ENCODE measurements at regions of chr9 and their contacts with region 1.

Region 1: DNA sequence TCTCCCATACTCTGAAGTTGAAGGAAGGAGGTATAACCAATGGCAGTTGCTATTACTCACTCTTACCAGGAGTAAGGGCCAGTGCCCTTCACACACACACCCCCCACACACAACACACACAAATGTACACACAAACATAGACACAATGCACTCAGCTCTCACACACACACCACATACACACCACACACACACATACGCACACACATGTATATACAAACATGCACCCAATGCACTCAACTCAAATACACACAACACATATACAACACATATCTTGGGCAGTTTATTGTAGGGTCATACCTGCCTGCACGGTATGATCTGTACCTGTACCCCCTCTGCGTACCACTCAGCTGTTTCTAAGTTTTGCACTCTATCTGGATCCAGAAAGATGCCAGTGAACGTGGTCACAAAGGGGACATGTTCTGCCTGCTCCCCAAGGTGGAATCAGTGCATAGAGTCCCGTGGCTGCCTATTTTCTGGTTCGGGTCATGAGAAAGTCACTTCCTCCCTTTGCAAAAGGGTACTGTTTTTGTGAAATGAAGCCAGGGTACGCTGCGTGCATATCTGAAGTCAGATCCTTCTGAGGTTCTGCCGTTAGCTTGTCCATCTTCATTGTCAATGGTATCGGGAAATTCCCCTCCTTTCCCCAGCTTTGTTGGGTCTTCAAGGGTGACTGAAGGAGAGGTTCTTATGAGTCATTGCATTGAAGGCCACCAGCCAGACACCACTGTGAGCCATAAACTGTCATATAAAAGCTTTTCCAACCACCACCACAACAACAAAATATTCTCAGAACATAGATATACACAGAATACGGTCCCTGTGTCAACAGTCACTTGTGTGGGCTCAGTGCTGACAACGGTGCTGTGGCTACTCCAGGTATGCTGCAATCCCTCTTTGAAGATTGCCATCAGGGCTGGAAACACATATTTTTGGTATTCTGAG is 131.9 kb downstream of the UGCG start:
- DNase-seq: peak; percentile 53
- ATAC-seq: peak; percentile 78
- H3K4me3 Mint-ChIP-seq: no peak overlapping the region
- H3K27ac Mint-ChIP-seq: peak overlapping the region; percentile 1
- H3K4me1 Mint-ChIP-seq: peaks cover 45% of the 10 kb centered on the region
- H3K27me3 Mint-ChIP-seq: peaks cover 5% of the 10 kb centered on the region

Region 2: DNA sequence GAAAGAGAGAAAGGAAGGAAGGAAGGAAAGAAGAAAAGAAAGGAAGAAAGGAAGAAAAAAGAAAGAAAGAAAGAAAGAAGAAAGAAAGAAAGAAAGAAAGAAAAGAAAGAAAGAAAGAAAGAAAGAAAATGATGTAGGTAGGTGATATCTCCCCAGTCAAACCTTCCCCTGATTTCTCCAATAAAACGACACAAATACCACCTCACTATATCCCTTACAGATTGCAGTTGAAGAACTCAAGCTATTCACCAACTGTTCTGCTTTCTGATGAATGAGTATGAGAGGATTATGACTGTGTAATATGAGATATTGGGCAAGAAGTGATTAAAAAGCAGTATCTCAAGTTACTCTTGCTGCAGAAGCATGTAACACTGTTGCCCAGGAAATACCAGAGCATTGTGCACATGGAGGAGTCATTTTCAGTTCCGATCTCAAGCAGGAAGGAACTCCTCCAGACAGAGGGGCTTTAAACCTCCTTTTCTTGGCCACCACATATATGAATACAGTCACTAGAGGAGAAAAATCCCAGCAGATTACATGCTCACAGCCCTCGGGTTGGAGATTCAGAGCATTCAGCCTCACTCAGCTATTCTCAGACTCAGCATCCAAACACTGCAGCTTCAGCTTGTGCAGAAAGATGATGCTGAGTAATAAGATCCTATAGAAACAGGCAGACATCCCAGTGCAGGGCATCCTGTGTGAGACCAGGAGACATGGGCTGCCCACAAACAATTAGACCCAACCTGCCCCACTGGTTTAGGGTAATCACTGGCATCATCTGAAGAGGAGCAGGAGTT is 70.5 kb before region 1 on chr9:
- CTCF ChIA-PET with region 1: no interaction called
- POLR2A ChIA-PET with region 1: no interaction called
- intact Hi-C with region 1: loop called in 1 of 2 experiments (anchors 2 kb)
- DNase-seq: peak; percentile 27
- ATAC-seq: peak; percentile 84
- H3K4me3 Mint-ChIP-seq: peak overlapping the region; percentile 18
- H3K27ac Mint-ChIP-seq: no peak overlapping the region
- H3K4me1 Mint-ChIP-seq: peaks cover 23% of the 10 kb centered on the region
- H3K27me3 Mint-ChIP-seq: peaks cover 12% of the 10 kb centered on the region

Region 3: GRCh38 chr9:112012026-112012902 is 16.3 kb before region 1 on chr9:
- CTCF ChIA-PET with region 1: interaction called, 3 read pairs
- POLR2A ChIA-PET with region 1: no interaction called
- intact Hi-C with region 1: loop called in 1 of 2 experiments (anchors 1 kb)
- DNase-seq: peak; percentile 43
- ATAC-seq: peak; percentile 97
- H3K4me3 Mint-ChIP-seq: no peak overlapping the region
- H3K27ac Mint-ChIP-seq: peak overlapping the region; percentile 27
- H3K4me1 Mint-ChIP-seq: peaks cover 34% of the 10 kb centered on the region
- H3K27me3 Mint-ChIP-seq: peaks cover 17% of the 10 kb centered on the region

Measured in activated CD4-positive, alpha-beta T cell treated with anti-CD3 and anti-CD28 coated beads for 36 hours (primary cell).